ENCODE measurements at regions of chr16 and their contacts with region 1.

Region 1: DNA sequence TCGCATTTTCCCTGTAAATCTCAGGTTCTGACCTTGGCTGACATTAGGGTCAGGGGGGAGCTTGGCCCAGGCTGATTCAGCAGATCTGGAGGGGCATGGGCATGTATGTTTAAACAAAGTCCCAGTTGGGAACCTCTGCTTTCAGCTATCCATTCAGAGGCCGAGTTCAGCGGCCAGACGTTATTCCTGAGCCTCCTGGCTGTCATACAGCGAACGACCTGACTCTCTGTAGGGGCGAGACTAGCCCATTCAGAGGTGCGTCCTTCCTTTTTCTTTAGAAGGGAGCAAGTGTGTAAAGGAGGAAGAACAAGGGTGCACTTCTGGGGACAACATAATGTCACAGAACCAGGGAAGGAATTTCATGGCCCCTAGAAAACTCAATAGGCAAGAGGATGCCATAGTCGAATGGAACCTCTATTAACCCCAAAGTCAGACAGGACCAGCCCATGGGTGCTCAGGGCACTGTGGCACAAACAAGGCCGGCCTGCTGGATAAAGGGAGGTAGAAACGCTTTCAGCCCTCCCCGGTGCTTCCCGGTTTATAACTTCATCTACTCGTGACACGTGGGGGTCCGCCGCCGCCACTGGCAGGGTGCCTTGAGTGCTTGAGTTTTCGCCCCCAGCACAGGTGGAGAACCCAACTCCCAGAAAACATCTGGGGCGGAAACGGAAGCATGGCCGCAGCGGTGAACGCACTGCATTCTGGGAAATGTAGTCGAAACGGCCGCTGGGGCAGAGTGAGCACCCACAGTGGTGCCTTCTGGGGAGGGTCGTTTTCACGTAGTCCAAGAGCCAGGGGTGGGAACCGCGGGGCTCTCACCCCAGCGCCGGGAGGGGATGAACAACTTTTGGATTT is 33.2 kb upstream of the PLCG2 start:
- DNase-seq: peak; percentile 51 to 76 (median 72)
- H3K4me3 ChIP-seq: peak overlapping the region; percentile 27
- H3K27ac ChIP-seq: no peak overlapping the region
- H3K4me1 ChIP-seq: peaks cover 4% of the 10 kb centered on the region
- H3K27me3 ChIP-seq: no peaks in the 10 kb centered on the region
- CTCF ChIP-seq: no peak
- EP300 ChIP-seq: no peak
- POLR2A ChIP-seq: no peak

Region 2: GRCh38 chr16:81035398-81035974 is 710.4 kb before region 1 on chr16 and contains the start of gene ATMIN:
- intact Hi-C with region 1: loop called in 1 of 4 experiments (anchors 10 kb)
- DNase-seq: peak; percentile 79 to 92 (median 87)
- H3K4me3 ChIP-seq: peak within 1 kb of the TSS; percentile 76
- H3K27ac ChIP-seq: no peak within 1 kb of the TSS
- H3K4me1 ChIP-seq: peaks cover 7% of the 10 kb centered on the region
- H3K27me3 ChIP-seq: no peaks in the 10 kb centered on the region
- CTCF ChIP-seq: peak; percentile 93 to 98 (median 97)
- EP300 ChIP-seq: no peak
- POLR2A ChIP-seq: peak; percentile 23
- total RNA-seq, gene ATMIN: 19.2 to 35.0 (median 33.8) TPM

Region 3: DNA sequence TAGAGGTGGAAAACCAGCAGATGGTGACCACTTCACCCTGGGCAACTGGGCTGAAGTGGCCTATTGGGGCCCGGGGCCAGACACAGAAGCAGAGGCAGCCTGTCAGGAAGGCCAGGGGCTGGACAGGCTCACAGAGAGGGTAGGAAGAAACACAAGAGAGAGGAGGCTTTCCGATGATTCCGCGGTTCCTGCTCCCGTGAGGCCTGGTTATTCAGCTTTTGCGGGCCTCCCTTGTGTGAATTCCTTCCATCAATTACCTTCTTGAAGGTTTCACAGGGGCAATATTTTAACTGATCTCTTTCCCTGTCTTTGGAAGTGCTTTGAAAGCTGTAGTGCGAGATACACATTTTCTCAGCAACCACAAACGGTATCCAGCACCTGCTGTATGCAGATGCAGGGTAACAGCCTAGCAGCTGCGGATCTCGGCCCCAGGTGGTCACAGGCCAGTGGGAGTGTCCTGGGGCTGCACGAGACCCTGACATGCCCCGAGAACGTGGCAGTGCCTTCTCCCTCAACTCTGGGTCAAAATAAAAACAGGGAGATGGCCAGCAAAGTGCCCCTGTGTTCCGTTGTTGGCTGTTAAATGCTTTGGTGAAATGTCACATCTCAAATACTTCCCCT is 312.9 kb before region 1 on chr16:
- intact Hi-C with region 1: no loop called
- DNase-seq: no peak
- H3K4me3 ChIP-seq: no peak overlapping the region
- H3K27ac ChIP-seq: no peak overlapping the region
- H3K4me1 ChIP-seq: no peaks in the 10 kb centered on the region
- H3K27me3 ChIP-seq: no peaks in the 10 kb centered on the region
- CTCF ChIP-seq: no peak
- EP300 ChIP-seq: no peak
- POLR2A ChIP-seq: no peak

Measured in ovary (tissue), 10 donors.